A549 (cell line): ENCODE measurements at regions of chr12 and their contacts with region 1.

Region 1: GRCh38 chr12:123126186-123127006 is 24.5 kb downstream of the PITPNM2 start:
- DNase-seq: peak; percentile 94
- ATAC-seq: peak; percentile 96 to 98
- H3K4me3 ChIP-seq: no peak overlapping the region
- H3K27ac ChIP-seq: peak overlapping the region; percentile 91 to 96
- H3K4me1 ChIP-seq: peaks cover 58% of the 10 kb centered on the region
- CTCF ChIP-seq: no peak
- EP300 ChIP-seq: peak; percentile 10 to 56; a peak in 2 of 5 replicates
- POLR2A ChIP-seq: no peak
- RAD21 ChIP-seq: peak in 1 of 2 experiments; percentile 17; a peak in 1 of 5 replicates

Region 2: GRCh38 chr12:122749569-122750373 is 376.6 kb before region 1 on chr12:
- CTCF ChIA-PET with region 1: no interaction called
- POLR2A ChIA-PET with region 1: no interaction called
- DNase-seq: peak; percentile 64 to 71
- ATAC-seq: peak in 1 of 2 experiments; percentile 26; a peak in 2 of 6 replicates
- H3K4me3 ChIP-seq: no peak overlapping the region
- H3K27ac ChIP-seq: peak overlapping the region; percentile 61 to 79
- H3K4me1 ChIP-seq: peaks cover 25% of the 10 kb centered on the region
- CTCF ChIP-seq: no peak
- EP300 ChIP-seq: no peak
- POLR2A ChIP-seq: no peak
- RAD21 ChIP-seq: no peak

Region 3: GRCh38 chr12:123115409-123116121 is 10.8 kb before region 1 on chr12:
- CTCF ChIA-PET with region 1: interaction called, 10 read pairs
- POLR2A ChIA-PET with region 1: no interaction called
- DNase-seq: no peak
- ATAC-seq: peak in 1 of 2 experiments; percentile 41; a peak in 2 of 6 replicates
- H3K4me3 ChIP-seq: no peak overlapping the region
- H3K27ac ChIP-seq: peak overlapping the region in 1 of 2 experiments; percentile 64; a peak in 2 of 6 replicates
- H3K4me1 ChIP-seq: peaks cover 15% of the 10 kb centered on the region
- CTCF ChIP-seq: no peak
- EP300 ChIP-seq: no peak
- POLR2A ChIP-seq: no peak
- RAD21 ChIP-seq: no peak